ENCODE measurements at regions of chr17 and their contacts with region 1.

Region 1: DNA sequence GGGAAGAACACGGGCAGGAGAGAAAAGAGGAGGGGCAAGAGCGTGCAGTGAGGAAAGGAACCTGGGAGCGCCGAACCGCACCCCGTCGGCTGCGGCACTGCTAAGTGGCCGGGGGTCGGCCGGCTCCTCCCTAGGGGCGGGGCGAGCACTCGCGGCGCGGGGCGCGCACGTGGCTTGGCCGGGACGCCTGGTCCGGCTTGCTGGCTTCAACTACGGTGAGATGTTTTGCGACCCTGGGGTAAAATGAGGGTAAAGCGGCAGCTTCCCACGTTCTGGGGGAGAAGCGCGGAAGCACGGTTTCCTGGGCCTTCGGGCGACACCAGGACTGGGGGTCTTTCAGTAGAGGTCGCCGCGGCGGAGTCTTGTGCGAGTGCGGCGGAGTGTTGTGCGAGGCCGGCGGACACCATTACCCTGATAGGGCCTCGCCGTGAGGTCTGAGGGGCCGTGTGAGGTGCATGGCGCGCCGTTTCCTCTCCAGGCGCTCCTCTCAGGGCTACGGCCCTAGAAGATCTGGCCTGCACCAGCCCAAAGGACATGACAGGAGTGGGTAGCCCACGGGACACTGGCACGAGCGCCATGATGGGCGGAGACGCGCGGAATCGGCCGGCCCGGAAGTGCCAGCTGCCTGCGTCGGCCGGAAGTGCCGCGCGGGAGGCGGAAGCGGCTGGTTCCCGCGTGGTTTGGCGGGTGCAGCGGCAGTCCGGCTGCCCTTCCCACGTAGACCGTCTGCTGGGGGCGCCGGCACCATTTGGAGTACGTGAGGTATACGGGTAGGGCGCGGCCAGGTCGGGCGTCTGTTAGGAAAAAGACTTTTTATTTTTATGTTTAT is at the starts of genes MYO19 and PIGW:
- DNase-seq: peak; percentile 92
- ATAC-seq: peak; percentile 79
- H3K4me3 Mint-ChIP-seq: peak within 1 kb of the TSS; percentile 91
- H3K27ac Mint-ChIP-seq: peak within 1 kb of the TSS; percentile 96
- H3K4me1 Mint-ChIP-seq: peaks cover 30% of the 10 kb centered on the region
- H3K27me3 Mint-ChIP-seq: no peaks in the 10 kb centered on the region
- total RNA-seq, gene MYO19: 113 to 117 TPM
- total RNA-seq, gene PIGW: 8.6 to 11.1 TPM

Region 2: DNA sequence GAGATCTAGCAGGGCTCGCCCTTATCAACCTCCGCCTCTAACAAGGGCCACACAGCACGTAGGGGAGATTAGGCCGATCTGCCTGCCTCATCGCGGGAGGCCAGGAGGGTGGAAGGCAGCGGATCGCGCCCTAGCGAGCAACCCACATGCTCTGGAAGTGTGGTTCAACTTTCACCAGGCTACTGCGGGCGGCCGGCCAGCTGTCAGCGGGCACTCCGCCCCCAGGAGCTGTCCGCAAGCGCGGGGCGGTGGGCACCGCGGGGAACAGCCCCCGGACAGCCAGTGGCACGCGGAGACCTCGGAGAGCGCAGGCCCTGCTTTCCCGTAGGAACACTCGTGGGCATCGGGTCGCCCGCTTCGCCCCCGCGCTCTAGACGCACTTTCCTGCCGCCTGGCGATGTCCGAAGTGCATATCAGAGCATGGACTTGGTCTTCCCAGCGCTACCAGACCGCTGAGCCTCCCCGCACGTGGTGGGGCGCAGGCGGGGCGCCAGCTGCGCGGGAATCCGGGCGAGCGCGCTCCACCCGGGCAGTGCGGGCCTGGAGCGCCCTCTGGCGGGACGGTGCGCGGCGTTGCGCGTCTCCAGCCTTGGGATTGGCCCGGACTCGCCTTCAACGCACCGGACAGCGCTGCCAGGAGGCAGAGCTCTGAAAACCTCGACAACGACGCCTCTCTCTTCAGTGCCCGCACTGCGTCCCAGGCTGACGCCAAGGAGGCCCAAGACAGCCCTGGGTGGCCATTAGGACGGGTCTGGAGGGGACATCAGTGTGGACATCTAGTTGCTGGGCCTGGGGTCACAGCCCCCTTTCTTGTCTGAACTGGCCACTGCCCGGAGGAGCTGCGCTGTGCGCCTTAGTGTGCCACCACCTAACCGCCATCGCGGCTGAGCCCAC is 52.2 kb before region 1 on chr17:
- POLR2A ChIA-PET with region 1: no interaction called
- DNase-seq: peak; percentile 94
- ATAC-seq: peak; percentile 58
- H3K4me3 Mint-ChIP-seq: peak overlapping the region; percentile 46
- H3K27ac Mint-ChIP-seq: no peak overlapping the region
- H3K4me1 Mint-ChIP-seq: peaks cover 14% of the 10 kb centered on the region
- H3K27me3 Mint-ChIP-seq: peaks cover 31% of the 10 kb centered on the region

Region 3: DNA sequence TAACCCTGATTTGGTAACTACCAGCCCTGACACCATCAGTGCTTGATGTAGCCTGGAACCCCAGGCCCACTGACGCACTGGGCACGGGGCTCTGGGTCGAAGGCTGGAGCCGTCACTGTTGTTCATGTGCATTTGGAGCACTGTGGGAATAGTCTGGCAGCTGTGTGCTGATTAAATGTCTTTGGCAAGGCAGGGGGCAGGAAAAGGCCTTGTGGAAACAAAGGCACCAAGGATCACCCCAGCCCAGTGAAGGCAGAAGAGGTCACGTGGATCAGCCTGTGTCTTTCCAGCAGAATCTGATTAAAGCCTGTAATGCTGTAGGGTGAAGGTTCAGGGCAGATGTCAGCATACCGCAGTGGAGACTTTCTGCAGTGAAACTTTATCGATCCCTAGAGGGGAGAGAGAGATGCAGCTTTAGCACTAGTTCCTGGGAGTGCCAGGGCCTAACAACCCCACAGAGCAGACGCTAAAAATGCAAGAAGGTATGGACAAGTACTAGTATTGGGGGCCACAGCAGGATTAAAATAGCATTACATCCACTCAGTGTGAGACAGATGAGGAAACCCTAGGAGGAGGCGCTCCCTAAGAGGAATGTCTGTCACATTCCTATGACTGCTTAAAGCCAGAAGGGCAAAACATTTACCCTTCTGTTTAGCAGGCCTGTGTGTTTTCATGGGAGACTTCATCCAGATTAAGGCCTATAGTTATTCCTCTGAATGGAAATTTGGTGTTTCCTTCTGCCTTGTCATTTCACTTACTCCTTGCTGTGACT is 38.9 kb before region 1 on chr17:
- POLR2A ChIA-PET with region 1: no interaction called
- DNase-seq: no peak
- ATAC-seq: no peak
- H3K4me3 Mint-ChIP-seq: no peak overlapping the region
- H3K27ac Mint-ChIP-seq: no peak overlapping the region
- H3K4me1 Mint-ChIP-seq: peaks cover 3% of the 10 kb centered on the region
- H3K27me3 Mint-ChIP-seq: no peaks in the 10 kb centered on the region

Region 4: DNA sequence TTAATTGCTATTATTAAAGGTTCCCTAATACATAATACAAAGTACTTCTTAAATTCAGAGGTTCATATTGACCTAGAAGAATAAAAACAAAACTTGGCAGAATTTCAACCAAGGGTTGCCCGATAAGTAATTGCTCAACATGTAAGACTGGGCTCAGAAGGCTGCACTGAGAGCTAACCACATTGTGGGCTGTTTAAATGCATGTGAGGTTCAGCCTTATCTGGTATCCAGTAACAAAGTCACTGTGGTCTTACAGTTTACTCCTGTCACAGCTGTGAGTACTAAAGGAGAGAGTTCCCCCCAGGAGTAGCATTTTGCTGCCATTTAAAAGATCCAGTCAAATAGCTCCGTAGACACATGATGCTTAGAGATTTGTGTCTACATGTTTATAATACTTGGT is 55.0 kb after region 1 on chr17:
- POLR2A ChIA-PET with region 1: no interaction called
- DNase-seq: no peak
- ATAC-seq: no peak
- H3K4me3 Mint-ChIP-seq: peak overlapping the region; percentile 4
- H3K27ac Mint-ChIP-seq: peak overlapping the region; percentile 43
- H3K4me1 Mint-ChIP-seq: peaks cover 29% of the 10 kb centered on the region
- H3K27me3 Mint-ChIP-seq: no peaks in the 10 kb centered on the region

Region 5: GRCh38 chr17:36601303-36602029 is 66.4 kb after region 1 on chr17 and contains the start of gene MRM1:
- POLR2A ChIA-PET with region 1: interaction called, 15 read pairs
- DNase-seq: peak; percentile 90
- ATAC-seq: peak; percentile 85
- H3K4me3 Mint-ChIP-seq: peak within 1 kb of the TSS; percentile 89
- H3K27ac Mint-ChIP-seq: peak within 1 kb of the TSS; percentile 96
- H3K4me1 Mint-ChIP-seq: peaks cover 29% of the 10 kb centered on the region
- H3K27me3 Mint-ChIP-seq: no peaks in the 10 kb centered on the region
- total RNA-seq, gene MRM1: 9.0 to 9.4 TPM

Region 6: DNA sequence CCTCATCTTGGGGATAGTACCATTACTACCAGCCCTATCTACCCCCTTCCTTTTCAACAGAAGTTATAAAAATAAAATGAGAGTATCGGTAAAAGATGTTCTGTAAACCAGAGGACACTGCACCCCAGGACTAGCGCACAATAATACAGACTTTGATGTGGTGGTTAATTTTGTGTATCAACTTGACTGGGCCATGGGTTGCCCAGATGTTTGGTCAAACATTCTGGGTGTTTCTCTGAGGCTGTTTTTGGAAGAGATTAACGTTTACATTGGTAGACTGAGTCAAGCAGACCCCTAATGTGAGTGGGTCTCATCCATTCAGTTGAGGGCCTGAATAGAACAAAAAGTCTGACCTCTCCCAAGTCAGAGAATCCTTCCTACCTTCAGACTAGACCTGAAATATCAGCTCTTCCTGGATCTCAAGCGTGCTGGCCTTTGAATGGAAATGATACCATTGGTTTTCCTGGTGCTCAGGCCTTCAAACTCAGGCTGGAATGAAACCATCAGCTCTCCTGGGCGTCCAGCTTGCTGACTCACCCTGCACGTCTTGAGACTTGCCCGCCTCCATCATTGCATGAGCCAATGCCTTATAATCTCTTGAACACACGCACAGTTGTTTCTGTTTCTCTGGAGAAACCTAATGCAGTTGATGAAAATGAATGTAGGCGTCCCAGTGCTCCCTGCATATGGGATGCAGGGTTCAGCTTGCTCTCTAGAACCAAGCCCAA is 76.5 kb after region 1 on chr17:
- POLR2A ChIA-PET with region 1: no interaction called
- DNase-seq: no peak
- ATAC-seq: no peak
- H3K4me3 Mint-ChIP-seq: no peak overlapping the region
- H3K27ac Mint-ChIP-seq: no peak overlapping the region
- H3K4me1 Mint-ChIP-seq: peaks cover 8% of the 10 kb centered on the region
- H3K27me3 Mint-ChIP-seq: no peaks in the 10 kb centered on the region